ENCODE measurements at regions of chr18 and their contacts with region 1.

Region 1: GRCh38 chr18:74495581-74496507 is at the start of gene CNDP2:
- DNase-seq: peak; percentile 99
- ATAC-seq: peak; percentile 72
- H3K4me3 ChIP-seq: peak within 1 kb of the TSS; percentile 78
- H3K27ac ChIP-seq: peak within 1 kb of the TSS; percentile 62
- H3K4me1 ChIP-seq: peaks cover 34% of the 10 kb centered on the region
- H3K27me3 ChIP-seq: no peaks in the 10 kb centered on the region
- CTCF ChIP-seq: no peak
- total RNA-seq, gene CNDP2: 50.0 and 57.6 TPM in 2 replicates

Region 2: GRCh38 chr18:74196220-74197119 is 299.4 kb before region 1 on chr18:
- CTCF ChIA-PET with region 1: no interaction called
- POLR2A ChIA-PET with region 1: no interaction called
- intact Hi-C with region 1: loop called (anchors 5 kb)
- DNase-seq: peak; percentile 75
- ATAC-seq: peak; percentile 90
- H3K4me3 ChIP-seq: peak overlapping the region; percentile 67
- H3K27ac ChIP-seq: no peak overlapping the region
- H3K4me1 ChIP-seq: no peaks in the 10 kb centered on the region
- H3K27me3 ChIP-seq: no peaks in the 10 kb centered on the region
- CTCF ChIP-seq: peak; percentile 96

Region 3: DNA sequence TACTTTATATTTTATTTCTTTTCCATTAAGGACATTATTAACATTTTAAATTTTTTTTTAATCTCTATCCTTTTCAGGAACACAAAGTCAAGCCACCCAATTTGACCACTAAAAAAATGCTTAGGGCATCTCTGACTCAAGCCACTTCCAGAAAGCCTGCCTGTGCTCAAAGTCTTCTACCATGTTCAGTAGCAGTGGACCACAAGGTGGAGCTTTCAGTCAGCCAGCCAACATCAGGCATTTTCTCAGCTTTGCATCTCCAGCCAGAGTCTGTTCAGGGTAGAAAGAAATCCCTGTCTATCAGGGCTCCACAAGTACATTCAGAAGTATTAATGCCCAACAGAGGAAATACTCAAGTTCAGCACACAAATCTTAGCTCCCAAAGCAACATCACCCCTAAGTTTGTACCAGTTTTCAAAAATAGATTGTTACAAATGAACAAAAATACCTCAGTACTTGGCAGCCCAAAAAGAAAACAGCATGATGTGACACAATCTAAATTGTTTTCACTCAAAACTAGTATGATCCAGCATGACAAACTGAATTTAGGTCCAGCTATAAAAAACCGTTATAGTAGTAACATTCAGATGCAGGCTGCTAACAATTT is 142.6 kb before region 1 on chr18:
- CTCF ChIA-PET with region 1: interaction called, 59 read pairs
- POLR2A ChIA-PET with region 1: no interaction called
- intact Hi-C with region 1: loop called (anchors 1 kb)
- DNase-seq: peak; percentile 73
- ATAC-seq: peak; percentile 93
- H3K4me3 ChIP-seq: no peak overlapping the region
- H3K27ac ChIP-seq: no peak overlapping the region
- H3K4me1 ChIP-seq: peaks cover 10% of the 10 kb centered on the region
- H3K27me3 ChIP-seq: peaks cover 38% of the 10 kb centered on the region
- CTCF ChIP-seq: peak; percentile 79

Region 4: GRCh38 chr18:74396171-74397169 is 99.4 kb before region 1 on chr18:
- CTCF ChIA-PET with region 1: no interaction called
- POLR2A ChIA-PET with region 1: no interaction called
- intact Hi-C with region 1: no loop called
- DNase-seq: no peak
- ATAC-seq: no peak
- H3K4me3 ChIP-seq: no peak overlapping the region
- H3K27ac ChIP-seq: no peak overlapping the region
- H3K4me1 ChIP-seq: no peaks in the 10 kb centered on the region
- H3K27me3 ChIP-seq: peaks cover 97% of the 10 kb centered on the region
- CTCF ChIP-seq: no peak

Region 5: GRCh38 chr18:74420481-74420880 is 75.4 kb before region 1 on chr18:
- CTCF ChIA-PET with region 1: no interaction called
- POLR2A ChIA-PET with region 1: no interaction called
- intact Hi-C with region 1: no loop called
- DNase-seq: no peak
- ATAC-seq: no peak
- H3K4me3 ChIP-seq: no peak overlapping the region
- H3K27ac ChIP-seq: no peak overlapping the region
- H3K4me1 ChIP-seq: no peaks in the 10 kb centered on the region
- H3K27me3 ChIP-seq: peaks cover 94% of the 10 kb centered on the region
- CTCF ChIP-seq: no peak

Region 6: GRCh38 chr18:74454279-74454751 is 41.5 kb before region 1 on chr18:
- CTCF ChIA-PET with region 1: interaction called, 12 read pairs
- POLR2A ChIA-PET with region 1: no interaction called
- intact Hi-C with region 1: no loop called
- DNase-seq: no peak
- ATAC-seq: no peak
- H3K4me3 ChIP-seq: no peak overlapping the region
- H3K27ac ChIP-seq: no peak overlapping the region
- H3K4me1 ChIP-seq: no peaks in the 10 kb centered on the region
- H3K27me3 ChIP-seq: peaks cover 93% of the 10 kb centered on the region
- CTCF ChIP-seq: no peak

Region 7: DNA sequence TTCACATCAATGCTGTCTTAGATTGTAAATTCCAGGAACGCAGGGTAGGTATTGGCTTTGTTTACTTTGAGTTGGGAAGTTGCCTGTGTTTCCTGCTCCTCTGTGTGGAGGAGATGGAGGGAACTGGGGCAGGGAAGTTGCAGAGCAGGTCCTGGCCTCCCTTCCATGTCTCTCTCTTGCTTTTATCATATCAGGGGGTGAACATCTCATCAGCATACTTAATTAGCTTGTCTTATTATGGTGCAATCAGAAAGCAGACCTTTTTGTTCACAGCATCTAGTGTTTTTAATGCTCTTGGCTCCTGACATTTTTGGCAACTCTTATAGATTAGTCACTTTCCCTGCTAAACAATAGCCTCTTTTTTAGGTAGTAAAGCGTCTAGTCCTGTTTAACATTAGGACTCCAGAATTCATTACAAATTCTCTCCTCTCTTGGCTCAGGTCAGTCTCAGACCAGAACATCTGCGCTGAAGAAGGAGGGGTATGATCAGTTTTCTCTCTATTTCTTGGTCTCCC is 27.2 kb before region 1 on chr18:
- CTCF ChIA-PET with region 1: no interaction called
- POLR2A ChIA-PET with region 1: no interaction called
- intact Hi-C with region 1: loop called (anchors 2 kb)
- DNase-seq: peak; percentile 73
- ATAC-seq: peak; percentile 96
- H3K4me3 ChIP-seq: no peak overlapping the region; the same call in 1 of the 2 replicates
- H3K27ac ChIP-seq: peak overlapping the region; percentile 49
- H3K4me1 ChIP-seq: peaks cover 18% of the 10 kb centered on the region
- H3K27me3 ChIP-seq: peaks cover 4% of the 10 kb centered on the region; the same call in 1 of the 2 replicates
- CTCF ChIP-seq: no peak